ENCODE measurements at regions of chr6 and their contacts with region 1.

Region 1: GRCh38 chr6:144294016-144294415 is 8.9 kb downstream of the UTRN start:
- DNase-seq: no peak
- ATAC-seq: peak in 1 of 4 donors; percentile 48
- H3K4me3 ChIP-seq: no peak overlapping the region
- H3K27ac ChIP-seq: peak overlapping the region in 1 of 12 donors; percentile 20
- H3K4me1 ChIP-seq: peaks cover 4 to 72% (median 32%) of the 10 kb centered on the region in 12 donors
- H3K27me3 ChIP-seq: no peaks in the 10 kb centered on the region
- CTCF ChIP-seq: no peak
- POLR2A ChIP-seq: no peak

Region 2: GRCh38 chr6:144171406-144171805 is 122.6 kb before region 1 on chr6:
- intact Hi-C with region 1: no loop called
- DNase-seq: no peak
- ATAC-seq: no peak
- H3K4me3 ChIP-seq: no peak overlapping the region
- H3K27ac ChIP-seq: no peak overlapping the region
- H3K4me1 ChIP-seq: peaks cover 0 to 7% (median 0%) of the 10 kb centered on the region in 12 donors
- H3K27me3 ChIP-seq: no peaks in the 10 kb centered on the region
- CTCF ChIP-seq: no peak
- POLR2A ChIP-seq: no peak

Region 3: GRCh38 chr6:144349690-144350527 is 55.9 kb after region 1 on chr6:
- intact Hi-C with region 1: loop called in 4 of 10 experiments (anchors 5 to 10 kb)
- DNase-seq: peak in 2 of 5 donors; percentile 38 to 52
- ATAC-seq: peak; percentile 64 to 89 (median 72)
- H3K4me3 ChIP-seq: peak overlapping the region in 8 of 12 donors; percentile 1 to 33 (median 10)
- H3K27ac ChIP-seq: peak overlapping the region in 11 of 12 donors; percentile 35 to 82 (median 67)
- H3K4me1 ChIP-seq: peaks cover 18 to 98% (median 71%) of the 10 kb centered on the region in 12 donors
- H3K27me3 ChIP-seq: no peaks in the 10 kb centered on the region
- CTCF ChIP-seq: no peak
- POLR2A ChIP-seq: no peak

Region 4: GRCh38 chr6:144944106-144944505 is 650.1 kb after region 1 on chr6:
- intact Hi-C with region 1: no loop called
- DNase-seq: no peak
- ATAC-seq: no peak
- H3K4me3 ChIP-seq: no peak overlapping the region
- H3K27ac ChIP-seq: no peak overlapping the region
- H3K4me1 ChIP-seq: no peaks in the 10 kb centered on the region
- H3K27me3 ChIP-seq: no peaks in the 10 kb centered on the region
- CTCF ChIP-seq: no peak
- POLR2A ChIP-seq: no peak